ENCODE measurements at regions of chr17 and their contacts with region 1.

Region 1: GRCh38 chr17:65100316-65101140 is 36.6 kb upstream of the RGS9 start:
- DNase-seq: peak; percentile 67 to 92 (median 77)
- ATAC-seq: peak; percentile 87
- H3K4me3 ChIP-seq: peak overlapping the region; percentile 68
- H3K4me3 Mint-ChIP-seq: peak overlapping the region; percentile 88
- H3K27ac ChIP-seq: peak overlapping the region in 1 of 2 donors; percentile 56
- H3K27ac Mint-ChIP-seq: peak overlapping the region; percentile 89
- H3K4me1 ChIP-seq: peaks cover 19% of the 10 kb centered on the region
- H3K4me1 Mint-ChIP-seq: peaks cover 26% of the 10 kb centered on the region
- H3K27me3 ChIP-seq: no peaks in the 10 kb centered on the region
- H3K27me3 Mint-ChIP-seq: no peaks in the 10 kb centered on the region
- CTCF ChIP-seq: peak; percentile 76

Region 2: DNA sequence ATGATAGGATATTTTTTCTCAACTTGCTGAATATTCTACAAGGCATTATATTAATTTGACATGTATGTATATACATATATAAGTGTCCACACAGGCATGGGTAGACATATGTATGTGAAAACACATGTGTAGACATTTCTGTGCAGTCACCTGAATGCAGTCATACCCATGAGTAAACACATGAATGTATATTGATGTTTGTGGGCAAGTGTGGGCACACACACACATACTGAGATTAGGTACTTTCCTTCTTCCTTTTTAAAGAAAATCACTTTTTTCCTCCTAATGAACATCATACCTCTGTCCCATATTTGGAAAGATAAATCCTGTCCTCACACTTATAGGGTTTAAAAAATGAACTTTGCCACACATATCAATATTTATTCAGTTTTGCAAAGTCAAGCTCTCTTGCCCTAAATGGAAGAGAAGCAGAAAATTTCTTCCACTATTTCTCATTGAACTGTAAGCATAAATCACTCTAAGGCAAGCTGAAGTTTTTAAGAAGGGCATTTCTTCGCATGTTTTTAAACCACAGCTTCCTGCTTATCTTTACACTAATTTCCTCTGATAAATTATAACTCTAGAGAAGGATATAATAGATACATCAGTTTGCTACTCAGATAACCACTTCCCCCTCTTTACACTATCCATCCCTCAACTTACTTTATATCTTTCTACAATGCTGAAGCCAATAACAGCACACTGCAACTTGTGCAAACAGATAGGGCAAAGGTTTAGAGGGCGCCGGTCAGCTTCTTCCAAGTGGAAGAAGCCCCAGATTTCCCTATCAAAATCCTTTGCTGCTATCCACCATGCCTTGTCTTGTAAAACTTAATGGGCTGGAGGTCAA is 131.7 kb before region 1 on chr17:
- CTCF ChIA-PET with region 1: interaction called, 18 read pairs
- POLR2A ChIA-PET with region 1: no interaction called
- intact Hi-C with region 1: loop called (anchors 1 to 2 kb)
- DNase-seq: peak in 3 of 14 experiments; percentile 50 to 78 (median 62)
- ATAC-seq: peak; percentile 15
- H3K4me3 ChIP-seq: no peak overlapping the region
- H3K4me3 Mint-ChIP-seq: peak overlapping the region; percentile 76
- H3K27ac ChIP-seq: peak overlapping the region; percentile 48 to 57
- H3K27ac Mint-ChIP-seq: peak overlapping the region; percentile 88
- H3K4me1 ChIP-seq: peaks cover 45% of the 10 kb centered on the region
- H3K4me1 Mint-ChIP-seq: peaks cover 77% of the 10 kb centered on the region
- H3K27me3 ChIP-seq: no peaks in the 10 kb centered on the region
- H3K27me3 Mint-ChIP-seq: no peaks in the 10 kb centered on the region
- CTCF ChIP-seq: no peak

Region 3: GRCh38 chr17:64984851-64985521 is 115.5 kb before region 1 on chr17:
- CTCF ChIA-PET with region 1: interaction called, 12 read pairs
- POLR2A ChIA-PET with region 1: interaction called, 9 read pairs
- intact Hi-C with region 1: loop called in 1 of 2 experiments (anchors 5 kb)
- DNase-seq: peak; percentile 22 to 92 (median 54)
- ATAC-seq: peak; percentile 58
- H3K4me3 ChIP-seq: peak overlapping the region; percentile 1
- H3K4me3 Mint-ChIP-seq: peak overlapping the region; percentile 80
- H3K27ac ChIP-seq: peak overlapping the region; percentile 93 to 94
- H3K27ac Mint-ChIP-seq: peak overlapping the region; percentile 98
- H3K4me1 ChIP-seq: peaks cover 40% of the 10 kb centered on the region
- H3K4me1 Mint-ChIP-seq: peaks cover 43% of the 10 kb centered on the region
- H3K27me3 ChIP-seq: no peaks in the 10 kb centered on the region
- H3K27me3 Mint-ChIP-seq: no peaks in the 10 kb centered on the region
- CTCF ChIP-seq: no peak

Region 4: GRCh38 chr17:65079489-65079902 is 21.0 kb before region 1 on chr17:
- CTCF ChIA-PET with region 1: interaction called, 10 read pairs
- POLR2A ChIA-PET with region 1: no interaction called
- intact Hi-C with region 1: no loop called
- DNase-seq: no peak
- ATAC-seq: no peak
- H3K4me3 ChIP-seq: no peak overlapping the region
- H3K4me3 Mint-ChIP-seq: no peak overlapping the region
- H3K27ac ChIP-seq: no peak overlapping the region
- H3K27ac Mint-ChIP-seq: no peak overlapping the region
- H3K4me1 ChIP-seq: no peaks in the 10 kb centered on the region
- H3K4me1 Mint-ChIP-seq: no peaks in the 10 kb centered on the region
- H3K27me3 ChIP-seq: no peaks in the 10 kb centered on the region
- H3K27me3 Mint-ChIP-seq: no peaks in the 10 kb centered on the region
- CTCF ChIP-seq: no peak

Region 5: GRCh38 chr17:65137021-65137991 is 36.8 kb after region 1 on chr17 and contains the start of gene RGS9:
- CTCF ChIA-PET with region 1: interaction called, 20 read pairs
- POLR2A ChIA-PET with region 1: interaction called, 5 read pairs
- intact Hi-C with region 1: loop called in 1 of 2 experiments (anchors 2 kb)
- DNase-seq: peak; percentile 68 to 93 (median 80)
- ATAC-seq: peak; percentile 97
- H3K4me3 ChIP-seq: peak within 1 kb of the TSS; percentile 51
- H3K4me3 Mint-ChIP-seq: peak within 1 kb of the TSS; percentile 78
- H3K27ac ChIP-seq: no peak within 1 kb of the TSS
- H3K27ac Mint-ChIP-seq: no peak within 1 kb of the TSS
- H3K4me1 ChIP-seq: peaks cover 30% of the 10 kb centered on the region
- H3K4me1 Mint-ChIP-seq: peaks cover 20% of the 10 kb centered on the region
- H3K27me3 ChIP-seq: peaks cover 2 to 7% of the 10 kb centered on the region in 2 experiments
- H3K27me3 Mint-ChIP-seq: peaks cover 18% of the 10 kb centered on the region
- CTCF ChIP-seq: peak; percentile 91
- total RNA-seq, gene RGS9: 0.60 to 0.73 TPM

Region 6: GRCh38 chr17:65147955-65148354 is 47.4 kb after region 1 on chr17:
- CTCF ChIA-PET with region 1: no interaction called
- POLR2A ChIA-PET with region 1: no interaction called
- intact Hi-C with region 1: no loop called
- DNase-seq: no peak
- ATAC-seq: no peak
- H3K4me3 ChIP-seq: no peak overlapping the region
- H3K4me3 Mint-ChIP-seq: no peak overlapping the region
- H3K27ac ChIP-seq: no peak overlapping the region
- H3K27ac Mint-ChIP-seq: no peak overlapping the region
- H3K4me1 ChIP-seq: peaks cover under 1% of the 10 kb centered on the region
- H3K4me1 Mint-ChIP-seq: no peaks in the 10 kb centered on the region
- H3K27me3 ChIP-seq: no peaks in the 10 kb centered on the region
- H3K27me3 Mint-ChIP-seq: peaks cover 4% of the 10 kb centered on the region
- CTCF ChIP-seq: no peak

Region 7: DNA sequence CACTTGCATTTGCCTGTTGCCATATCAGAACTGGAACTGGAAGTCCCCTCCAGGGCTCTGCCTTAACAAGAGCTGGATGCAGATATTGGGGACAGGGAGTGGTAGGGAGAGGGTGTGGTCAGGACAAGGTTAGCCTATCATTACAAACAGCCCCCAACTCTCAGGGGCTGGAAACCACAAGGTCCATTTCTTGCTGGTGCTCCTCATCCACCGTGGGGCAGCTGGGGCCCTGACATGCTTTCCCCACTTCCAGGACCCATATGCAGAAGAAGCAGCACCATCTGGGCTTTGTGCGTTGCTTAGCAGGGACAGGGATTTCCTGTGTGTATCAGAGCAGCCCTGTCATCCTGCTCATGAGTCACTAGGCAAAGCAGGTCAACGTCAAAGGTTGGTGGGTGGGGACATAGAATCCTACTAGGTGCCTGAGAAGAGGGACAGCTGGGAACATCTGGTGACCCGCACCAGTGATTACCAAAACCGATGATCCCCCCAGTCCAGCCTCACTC is 63.5 kb after region 1 on chr17:
- CTCF ChIA-PET with region 1: no interaction called
- POLR2A ChIA-PET with region 1: no interaction called
- intact Hi-C with region 1: no loop called
- DNase-seq: peak in 10 of 14 experiments; percentile 3 to 75 (median 32)
- ATAC-seq: peak; percentile 80
- H3K4me3 ChIP-seq: no peak overlapping the region
- H3K4me3 Mint-ChIP-seq: no peak overlapping the region
- H3K27ac ChIP-seq: no peak overlapping the region
- H3K27ac Mint-ChIP-seq: peak overlapping the region; percentile 37
- H3K4me1 ChIP-seq: peaks cover 12% of the 10 kb centered on the region
- H3K4me1 Mint-ChIP-seq: peaks cover 11% of the 10 kb centered on the region
- H3K27me3 ChIP-seq: no peaks in the 10 kb centered on the region
- H3K27me3 Mint-ChIP-seq: no peaks in the 10 kb centered on the region
- CTCF ChIP-seq: no peak

Region 8: GRCh38 chr17:65294179-65294720 is 193.7 kb after region 1 on chr17:
- CTCF ChIA-PET with region 1: no interaction called
- POLR2A ChIA-PET with region 1: no interaction called
- intact Hi-C with region 1: no loop called
- DNase-seq: peak; percentile 32 to 78 (median 50)
- ATAC-seq: peak; percentile 88
- H3K4me3 ChIP-seq: no peak overlapping the region
- H3K4me3 Mint-ChIP-seq: no peak overlapping the region
- H3K27ac ChIP-seq: no peak overlapping the region
- H3K27ac Mint-ChIP-seq: no peak overlapping the region
- H3K4me1 ChIP-seq: peaks cover 7% of the 10 kb centered on the region
- H3K4me1 Mint-ChIP-seq: peaks cover 5% of the 10 kb centered on the region
- H3K27me3 ChIP-seq: no peaks in the 10 kb centered on the region
- H3K27me3 Mint-ChIP-seq: peaks cover 3% of the 10 kb centered on the region
- CTCF ChIP-seq: peak; percentile 76